Right cardiac atrium (tissue), 5 donors: ENCODE measurements at regions of chr11 and their contacts with region 1.

Region 1: GRCh38 chr11:74449369-74449931 is 17.9 kb downstream of the KCNE3 start:
- DNase-seq: no peak
- ATAC-seq: peak; percentile 82 to 86
- H3K4me3 ChIP-seq: no peak overlapping the region
- H3K27ac ChIP-seq: no peak overlapping the region
- H3K4me1 ChIP-seq: no peaks in the 10 kb centered on the region
- H3K27me3 ChIP-seq: no peaks in the 10 kb centered on the region

Region 2: GRCh38 chr11:73965076-73965860 is 484.2 kb before region 1 on chr11:
- intact Hi-C with region 1: loop called in 2 of 4 experiments (anchors 5 to 10 kb)
- DNase-seq: no peak
- ATAC-seq: peak in 1 of 2 donors; percentile 8
- H3K4me3 ChIP-seq: no peak overlapping the region
- H3K27ac ChIP-seq: no peak overlapping the region
- H3K4me1 ChIP-seq: no peaks in the 10 kb centered on the region
- H3K27me3 ChIP-seq: no peaks in the 10 kb centered on the region

Region 3: DNA sequence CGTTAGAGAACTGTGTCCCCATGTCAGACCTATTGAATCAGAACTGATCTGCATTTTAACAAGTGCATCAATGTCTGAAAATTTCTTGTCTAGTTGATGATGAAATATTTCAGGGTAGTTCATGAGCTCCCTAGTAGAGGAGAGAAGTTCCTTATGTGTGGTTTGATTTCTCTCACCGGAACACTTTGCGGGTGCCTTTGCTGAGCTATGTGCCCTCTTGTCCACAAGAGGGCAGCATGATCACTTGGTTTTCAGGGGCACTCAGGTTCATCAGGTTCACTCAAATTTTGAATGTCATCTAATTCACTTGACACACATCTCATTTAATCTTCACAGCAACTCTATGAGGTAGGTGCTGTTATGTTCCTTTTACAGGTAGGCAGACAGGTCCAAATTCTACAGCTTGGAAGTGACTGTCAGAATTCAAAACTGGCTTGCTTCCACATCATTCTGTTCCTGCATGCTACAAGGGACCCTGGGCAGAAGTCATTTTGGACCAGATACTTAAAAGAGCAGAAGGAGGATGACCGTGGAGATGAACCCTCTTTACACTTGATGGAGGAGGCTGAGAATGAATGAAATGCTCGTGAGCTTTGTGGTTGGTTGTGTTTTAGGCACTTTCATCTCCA is 193.6 kb before region 1 on chr11:
- intact Hi-C with region 1: loop called (anchors 2 to 5 kb)
- DNase-seq: peak in 2 of 3 donors; percentile 18 to 68
- ATAC-seq: peak; percentile 44 to 71
- H3K4me3 ChIP-seq: no peak overlapping the region
- H3K27ac ChIP-seq: no peak overlapping the region
- H3K4me1 ChIP-seq: no peaks in the 10 kb centered on the region
- H3K27me3 ChIP-seq: no peaks in the 10 kb centered on the region

Region 4: DNA sequence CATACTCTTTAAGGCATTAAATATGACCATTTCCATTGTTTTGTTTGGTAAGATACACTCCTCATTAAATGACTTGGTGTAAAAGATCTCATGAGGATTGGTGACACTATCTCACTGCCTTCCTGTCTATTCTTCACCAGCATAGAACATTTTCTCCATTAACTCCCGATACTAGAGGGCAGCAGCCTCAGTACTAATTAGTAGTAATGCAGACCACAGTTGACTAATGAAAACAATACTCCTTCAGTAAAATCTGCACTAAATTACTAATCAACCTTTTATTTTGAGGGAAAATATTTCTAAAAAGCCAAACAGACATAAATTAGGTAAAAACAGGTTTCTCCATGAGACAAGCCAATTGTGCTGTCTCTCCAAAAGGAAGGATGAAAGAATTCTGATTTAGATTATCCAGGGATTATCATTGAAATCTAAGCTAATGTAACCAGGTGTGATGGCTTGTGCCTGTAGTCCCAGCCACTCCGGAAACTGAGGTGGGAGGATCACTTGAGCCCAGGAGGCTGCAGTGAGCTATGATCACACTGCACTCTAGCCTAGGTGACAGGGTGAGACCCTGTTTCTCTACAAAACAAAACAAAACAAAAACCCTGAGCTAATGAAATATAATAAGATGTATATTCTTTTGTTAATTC is 60.6 kb before region 1 on chr11:
- intact Hi-C with region 1: loop called (anchors 2 to 5 kb)
- DNase-seq: peak in 1 of 3 donors; percentile 29
- ATAC-seq: peak; percentile 72 to 78
- H3K4me3 ChIP-seq: no peak overlapping the region
- H3K27ac ChIP-seq: no peak overlapping the region
- H3K4me1 ChIP-seq: no peaks in the 10 kb centered on the region
- H3K27me3 ChIP-seq: no peaks in the 10 kb centered on the region

Region 5: DNA sequence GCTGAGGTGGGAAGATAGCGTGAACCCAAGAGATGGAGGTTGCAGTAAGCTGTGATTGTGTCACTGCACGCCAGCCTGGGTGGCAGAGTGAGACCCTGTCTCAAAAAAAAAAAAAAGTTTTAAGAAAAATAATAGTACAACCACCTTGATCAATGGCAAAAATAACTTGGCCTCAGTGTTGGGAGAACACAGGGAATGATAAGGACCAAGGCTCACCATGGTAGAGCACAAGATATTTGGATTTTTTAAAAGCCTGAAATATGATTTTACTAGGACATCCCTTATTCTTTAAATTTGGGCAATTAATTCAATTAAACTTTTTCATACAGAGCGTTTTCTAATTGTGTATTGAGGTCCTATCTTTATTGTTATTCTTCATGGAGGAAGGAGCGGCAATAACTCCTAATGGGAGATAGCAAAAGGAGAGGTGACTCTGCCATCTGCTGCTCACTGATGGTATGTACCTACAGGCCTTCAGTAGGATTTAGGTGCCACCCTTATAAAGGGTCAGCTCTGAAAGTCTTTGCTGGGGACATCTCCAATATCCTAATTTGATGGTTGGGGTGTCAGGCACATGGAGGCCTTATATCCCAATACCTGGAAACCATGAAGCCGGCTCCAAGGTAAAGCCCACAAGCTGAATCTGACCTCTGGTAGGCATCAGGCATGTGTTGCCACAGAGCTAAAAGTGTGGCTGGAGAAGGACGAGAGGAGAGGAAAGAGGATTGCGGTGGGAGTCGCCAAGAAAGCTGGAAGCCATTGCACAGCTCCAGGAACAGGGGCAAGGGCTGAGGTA is 121.0 kb after region 1 on chr11:
- intact Hi-C with region 1: loop called (anchors 1 to 10 kb)
- DNase-seq: peak in 2 of 3 donors; percentile 18 to 64
- ATAC-seq: peak in 1 of 2 donors; percentile 83
- H3K4me3 ChIP-seq: no peak overlapping the region
- H3K27ac ChIP-seq: no peak overlapping the region
- H3K4me1 ChIP-seq: no peaks in the 10 kb centered on the region
- H3K27me3 ChIP-seq: no peaks in the 10 kb centered on the region